ENCODE measurements at regions of chr21 and their contacts with region 1.

Region 1: DNA sequence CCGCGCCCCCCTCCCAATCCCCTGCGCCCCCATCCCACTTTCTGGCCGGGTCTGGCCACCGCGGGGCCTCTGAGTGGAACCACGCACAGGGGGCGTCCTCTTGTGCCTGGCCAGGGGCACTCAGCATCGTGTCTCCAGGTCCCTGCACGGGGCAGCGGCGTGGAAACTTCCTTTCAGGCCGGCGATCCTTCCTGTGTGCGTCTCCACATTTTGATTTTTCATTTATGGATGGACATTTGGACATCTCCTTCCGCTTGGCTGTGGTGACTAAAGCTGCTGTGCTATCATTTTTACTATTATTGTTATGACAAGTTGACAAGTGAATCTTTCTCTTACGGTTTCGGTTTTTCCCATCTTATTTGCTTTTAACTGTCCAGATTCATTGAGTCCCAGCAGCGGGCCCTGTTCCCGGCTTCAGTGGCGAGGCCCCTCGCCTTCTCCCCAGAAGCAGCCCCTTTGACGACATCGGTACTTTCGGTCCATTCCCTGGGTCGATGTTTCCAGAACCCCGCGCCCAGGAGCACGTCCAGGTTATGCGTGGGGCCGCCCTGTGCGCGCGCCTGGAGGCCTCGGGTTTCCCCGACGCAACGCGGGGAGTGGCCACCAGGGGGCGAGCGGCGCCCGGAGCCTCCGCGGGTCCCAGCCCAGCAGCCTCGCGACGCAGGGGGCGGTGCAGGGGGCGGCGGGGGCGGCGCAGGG is 12.4 kb upstream of the SLC19A1 start:
- DNase-seq: peak; percentile 98
- H3K4me3 Mint-ChIP-seq: peak overlapping the region; percentile 88
- H3K27ac Mint-ChIP-seq: peak overlapping the region; percentile 90
- H3K4me1 Mint-ChIP-seq: peaks cover 25% of the 10 kb centered on the region
- H3K27me3 Mint-ChIP-seq: no peaks in the 10 kb centered on the region

Region 2: GRCh38 chr21:45469273-45470086 is 85.1 kb before region 1 on chr21:
- intact Hi-C with region 1: no loop called
- DNase-seq: no peak
- H3K4me3 Mint-ChIP-seq: no peak overlapping the region
- H3K27ac Mint-ChIP-seq: no peak overlapping the region
- H3K4me1 Mint-ChIP-seq: peaks cover 12% of the 10 kb centered on the region
- H3K27me3 Mint-ChIP-seq: peaks cover 4% of the 10 kb centered on the region

Region 3: GRCh38 chr21:45525153-45526025 is 29.2 kb before region 1 on chr21:
- intact Hi-C with region 1: no loop called
- DNase-seq: no peak
- H3K4me3 Mint-ChIP-seq: no peak overlapping the region
- H3K27ac Mint-ChIP-seq: no peak overlapping the region
- H3K4me1 Mint-ChIP-seq: no peaks in the 10 kb centered on the region
- H3K27me3 Mint-ChIP-seq: no peaks in the 10 kb centered on the region

Region 4: DNA sequence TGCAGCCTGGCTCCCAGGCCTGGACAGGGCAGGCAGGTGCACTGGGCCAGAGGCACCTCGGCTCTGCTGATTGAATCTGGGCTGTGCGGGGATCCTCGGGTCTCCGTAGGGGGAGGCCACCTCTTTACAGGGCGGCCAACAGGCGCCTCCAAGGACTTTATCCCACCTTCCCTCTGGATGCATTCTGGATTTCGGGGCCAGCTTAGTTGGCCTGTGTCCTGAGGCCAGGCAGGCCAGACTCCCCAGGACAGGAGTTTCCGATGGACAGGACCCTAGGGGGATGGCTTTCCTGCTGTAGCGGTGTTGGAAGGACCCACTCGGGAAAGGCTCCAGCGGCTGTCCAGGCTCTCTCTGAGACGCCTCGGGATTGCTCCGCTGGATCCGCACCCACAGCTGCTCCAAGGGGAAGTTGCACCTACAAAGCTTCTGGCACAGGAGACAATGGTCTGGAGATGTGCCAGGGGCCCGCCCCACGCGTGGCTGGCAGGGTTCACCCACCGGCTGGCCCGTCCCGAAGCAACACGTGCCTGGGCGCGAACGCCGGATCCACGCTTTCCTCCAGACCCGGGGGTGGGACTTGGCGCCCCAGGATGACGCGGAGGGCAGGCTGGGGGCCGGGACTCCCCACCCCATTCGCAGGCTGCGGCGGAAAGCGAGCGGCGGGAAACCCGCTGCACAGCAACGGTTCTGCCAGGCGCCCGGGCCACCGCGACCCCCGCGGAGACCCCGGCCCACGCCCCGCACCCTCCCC is 13.2 kb before region 1 on chr21:
- intact Hi-C with region 1: loop called (anchors 1 kb)
- DNase-seq: peak; percentile 95
- H3K4me3 Mint-ChIP-seq: peak overlapping the region; percentile 84
- H3K27ac Mint-ChIP-seq: peak overlapping the region; percentile 84
- H3K4me1 Mint-ChIP-seq: peaks cover 11% of the 10 kb centered on the region
- H3K27me3 Mint-ChIP-seq: no peaks in the 10 kb centered on the region

Region 5: GRCh38 chr21:45596704-45597318 is 42.2 kb after region 1 on chr21:
- intact Hi-C with region 1: loop called (anchors 1 kb)
- DNase-seq: peak; percentile 95
- H3K4me3 Mint-ChIP-seq: no peak overlapping the region
- H3K27ac Mint-ChIP-seq: no peak overlapping the region
- H3K4me1 Mint-ChIP-seq: peaks cover 19% of the 10 kb centered on the region
- H3K27me3 Mint-ChIP-seq: no peaks in the 10 kb centered on the region

Region 6: GRCh38 chr21:45643021-45643980 is 88.7 kb after region 1 on chr21 and contains the start of gene PCBP3:
- intact Hi-C with region 1: loop called (anchors 1 kb)
- DNase-seq: peak; percentile 98
- H3K4me3 Mint-ChIP-seq: peak within 1 kb of the TSS; percentile 82
- H3K27ac Mint-ChIP-seq: peak within 1 kb of the TSS; percentile 64
- H3K4me1 Mint-ChIP-seq: peaks cover 16% of the 10 kb centered on the region
- H3K27me3 Mint-ChIP-seq: peaks cover 11% of the 10 kb centered on the region
- total RNA-seq, gene PCBP3: 7.5 and 9.7 TPM in 2 replicates

Measured in activated CD4-positive, alpha-beta T cell treated with anti-CD3 and anti-CD28 coated beads, Interleukin-2, amount 10 ng/mL, durations not matched to agents 24 days and 14 days (primary cell).